K562 (cell line): ENCODE measurements at regions of chr17 and their contacts with region 1.

Region 1: DNA sequence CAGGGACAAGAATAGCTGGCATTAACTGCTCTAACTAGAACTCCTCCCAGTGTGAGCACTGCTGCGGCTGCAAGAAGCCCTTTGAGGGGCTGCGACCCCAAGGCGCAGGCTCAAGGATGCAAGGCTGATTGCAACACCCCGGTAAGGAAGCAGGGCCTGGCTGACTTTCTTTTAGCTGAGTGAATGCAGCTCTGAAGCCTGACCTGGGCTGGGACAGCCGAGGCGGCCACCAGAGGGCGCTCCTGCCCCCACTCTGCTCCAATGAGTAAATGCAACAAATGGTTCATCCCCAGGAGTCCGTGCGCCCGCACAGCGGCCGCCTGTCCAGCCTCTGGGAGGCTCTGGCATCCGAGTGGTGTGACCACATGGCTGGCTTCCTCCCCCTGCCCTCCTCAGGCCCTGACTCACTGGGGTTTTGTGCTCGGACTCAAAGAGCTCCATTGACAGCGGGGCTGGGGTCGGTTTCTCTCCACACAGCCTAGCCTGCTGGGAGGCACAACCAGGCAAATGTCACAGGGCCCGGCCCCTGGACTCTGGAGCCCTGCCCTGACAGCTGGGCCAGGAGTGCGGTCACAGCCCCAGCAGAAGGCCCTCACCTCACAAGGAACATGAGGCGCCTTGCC is at the start of gene SMIM5:
- DNase-seq: peak; percentile 88 to 89 (median 88)
- ATAC-seq: peak; percentile 90
- H3K4me3 ChIP-seq: no peak within 1 kb of the TSS
- H3K27ac ChIP-seq: peak within 1 kb of the TSS; percentile 51; the same call in 2 of the 3 replicates
- H3K4me1 ChIP-seq: peaks cover 18 to 59% of the 10 kb centered on the region in 2 experiments
- H3K27me3 ChIP-seq: no peaks in the 10 kb centered on the region
- CTCF ChIP-seq: peak; percentile 90 to 96 (median 92)
- EP300 ChIP-seq: no peak
- POLR2A ChIP-seq: no peak
- RAD21 ChIP-seq: peak; percentile 47 to 79
- polyA plus RNA-seq, gene SMIM5: not detected

Region 2: DNA sequence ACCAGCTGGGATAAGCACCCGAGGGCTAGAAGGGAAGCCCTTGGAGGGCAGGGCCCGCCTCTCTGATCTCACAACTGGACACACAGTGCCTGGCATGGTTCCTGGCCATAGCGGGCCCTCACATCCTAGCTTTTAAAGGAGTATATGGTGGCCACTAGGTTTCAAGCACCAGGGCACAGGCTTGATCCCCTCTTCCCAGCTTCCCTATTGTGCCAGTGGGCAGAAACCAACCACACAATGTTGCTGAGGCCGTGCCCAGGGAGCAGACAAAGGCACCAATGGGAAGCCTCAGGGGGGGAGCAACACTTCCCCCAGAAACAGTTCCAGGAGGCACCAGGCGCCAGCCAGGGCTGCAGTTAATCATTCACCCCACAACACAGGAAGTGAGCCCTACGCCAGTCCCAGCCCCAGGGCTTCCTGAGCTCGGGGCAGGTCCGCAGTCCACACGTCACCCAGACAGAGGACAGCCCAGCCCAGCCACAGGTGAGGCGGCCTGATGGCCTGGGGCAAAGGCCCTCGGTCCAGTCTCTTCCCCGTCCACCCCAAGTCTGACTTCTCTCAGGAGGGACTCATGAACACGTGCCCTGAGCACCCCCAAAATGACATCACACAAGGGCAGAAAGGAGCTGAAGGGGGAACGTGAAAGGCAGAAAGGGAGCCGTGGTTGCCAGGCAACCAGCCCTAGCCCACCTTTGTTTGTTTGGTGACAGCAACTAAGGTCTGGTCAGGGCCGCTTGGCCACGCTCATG is 13.1 kb after region 1 on chr17:
- CTCF ChIA-PET with region 1: no interaction called
- POLR2A ChIA-PET with region 1: interaction called, 15 read pairs
- in situ Hi-C with region 1: no loop called
- intact Hi-C with region 1: no loop called
- DNase-seq: no peak
- ATAC-seq: no peak
- H3K4me3 ChIP-seq: no peak overlapping the region
- H3K27ac ChIP-seq: no peak overlapping the region
- H3K4me1 ChIP-seq: peaks cover 15 to 21% of the 10 kb centered on the region in 2 experiments; a peak in 4 of 5 replicates
- H3K27me3 ChIP-seq: no peaks in the 10 kb centered on the region
- CTCF ChIP-seq: no peak
- EP300 ChIP-seq: no peak
- POLR2A ChIP-seq: no peak
- RAD21 ChIP-seq: no peak

Region 3: DNA sequence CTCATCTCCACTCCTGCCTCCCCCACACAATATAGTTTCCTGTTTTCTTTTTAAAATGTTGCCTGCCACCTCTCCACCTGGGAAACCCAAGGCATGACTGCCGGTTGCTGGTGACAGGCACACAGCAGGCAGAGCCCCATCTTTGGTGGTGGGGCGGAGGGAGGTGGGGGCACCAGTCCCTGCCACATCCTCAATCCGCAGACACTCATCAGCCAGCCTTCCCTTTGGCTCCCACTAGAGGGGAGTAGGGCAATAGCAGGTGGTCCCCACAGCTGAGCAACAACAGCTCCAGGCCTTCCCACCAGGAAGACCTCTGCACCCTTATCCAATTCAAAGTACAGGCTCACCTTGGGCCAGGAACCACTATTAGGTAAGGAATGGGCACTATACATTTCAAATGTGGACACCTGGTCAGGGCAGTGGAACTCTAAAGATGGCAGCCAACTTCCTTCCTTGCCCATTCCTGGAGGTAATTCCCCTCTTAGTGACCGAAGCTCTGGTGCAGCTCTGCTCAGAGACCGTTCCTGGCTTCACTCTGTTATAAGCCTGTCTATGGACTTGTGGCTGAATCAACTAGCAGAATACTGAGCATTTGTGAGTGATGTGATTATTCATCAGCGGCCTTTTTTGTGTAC is 20.1 kb after region 1 on chr17:
- CTCF ChIA-PET with region 1: interaction called, 10 read pairs
- POLR2A ChIA-PET with region 1: interaction called, 3 read pairs
- in situ Hi-C with region 1: no loop called
- intact Hi-C with region 1: no loop called
- DNase-seq: peak; percentile 63 to 71 (median 66)
- ATAC-seq: peak; percentile 94
- H3K4me3 ChIP-seq: no peak overlapping the region
- H3K27ac ChIP-seq: no peak overlapping the region
- H3K4me1 ChIP-seq: no peaks in the 10 kb centered on the region
- H3K27me3 ChIP-seq: no peaks in the 10 kb centered on the region
- CTCF ChIP-seq: peak; percentile 79 to 91 (median 83)
- EP300 ChIP-seq: no peak
- POLR2A ChIP-seq: no peak
- RAD21 ChIP-seq: peak; percentile 15 to 63; a peak in 2 of 4 replicates